ENCODE measurements at regions of chr3 and their contacts with region 1.

Region 1: DNA sequence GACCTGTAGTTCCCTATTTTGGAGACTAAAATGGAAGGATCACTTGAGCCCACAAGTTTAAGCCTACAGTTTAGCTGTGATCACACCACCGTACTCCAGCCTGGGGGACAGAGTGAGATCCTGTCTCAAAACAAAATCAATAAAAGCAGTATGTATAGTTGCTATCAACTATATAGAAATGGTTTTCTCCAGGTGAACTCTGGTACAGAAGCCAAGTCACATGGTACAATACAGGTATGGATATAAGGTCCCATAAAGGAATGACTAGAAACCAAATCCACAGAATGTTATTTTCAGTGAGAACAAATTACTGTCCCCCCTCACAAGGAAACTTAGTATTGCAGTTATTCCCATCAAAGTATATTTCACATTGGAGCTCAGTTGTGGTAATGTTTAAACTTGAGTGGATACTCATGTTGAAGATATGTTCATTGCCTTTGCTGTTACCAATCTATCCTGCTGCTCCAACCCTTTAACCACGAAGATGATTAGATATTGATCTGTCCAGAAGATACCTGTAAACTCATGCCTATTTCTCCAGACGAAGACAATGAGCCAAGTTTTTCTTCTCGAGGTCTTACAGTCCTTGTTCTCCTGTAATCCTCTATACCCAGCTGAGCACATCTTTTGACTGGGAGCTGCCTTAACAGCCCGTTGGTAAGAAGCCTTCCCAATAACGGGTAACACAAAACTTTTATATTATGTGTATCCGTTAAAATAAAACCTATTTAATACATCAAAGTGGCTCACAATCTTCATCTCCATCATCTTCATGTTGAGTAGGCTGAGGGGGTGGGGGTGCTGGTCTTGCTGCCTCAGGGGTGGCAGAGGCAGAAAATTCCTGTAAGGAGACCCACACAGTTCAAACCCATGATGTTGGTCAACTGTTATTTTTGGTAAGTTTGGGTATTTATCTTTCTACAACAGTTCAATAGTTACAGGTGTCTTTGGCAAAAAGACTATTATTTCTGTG is 24.6 kb downstream of the TRA2B start:
- DNase-seq: no peak
- ATAC-seq: peak; percentile 14
- H3K4me3 Mint-ChIP-seq: no peak overlapping the region
- H3K27ac Mint-ChIP-seq: no peak overlapping the region
- H3K4me1 Mint-ChIP-seq: no peaks in the 10 kb centered on the region
- H3K27me3 Mint-ChIP-seq: no peaks in the 10 kb centered on the region
- CTCF ChIP-seq: no peak

Region 2: GRCh38 chr3:185887066-185887465 is 26.1 kb before region 1 on chr3:
- CTCF ChIA-PET with region 1: no interaction called
- POLR2A ChIA-PET with region 1: no interaction called
- intact Hi-C with region 1: no loop called
- DNase-seq: no peak
- ATAC-seq: no peak
- H3K4me3 Mint-ChIP-seq: no peak overlapping the region
- H3K27ac Mint-ChIP-seq: no peak overlapping the region
- H3K4me1 Mint-ChIP-seq: no peaks in the 10 kb centered on the region
- H3K27me3 Mint-ChIP-seq: peaks cover 3% of the 10 kb centered on the region
- CTCF ChIP-seq: no peak

Region 3: GRCh38 chr3:185929192-185930151 is 16.3 kb after region 1 on chr3:
- CTCF ChIA-PET with region 1: no interaction called
- POLR2A ChIA-PET with region 1: interaction called, 12 read pairs
- intact Hi-C with region 1: loop called (anchors 2 kb)
- DNase-seq: no peak
- ATAC-seq: no peak
- H3K4me3 Mint-ChIP-seq: peak overlapping the region; percentile 99
- H3K27ac Mint-ChIP-seq: peak overlapping the region; percentile 81
- H3K4me1 Mint-ChIP-seq: peaks cover 91% of the 10 kb centered on the region
- H3K27me3 Mint-ChIP-seq: no peaks in the 10 kb centered on the region
- CTCF ChIP-seq: no peak

Region 4: GRCh38 chr3:186108941-186109865 is 196.0 kb after region 1 on chr3 and contains the start of gene ETV5:
- CTCF ChIA-PET with region 1: no interaction called
- POLR2A ChIA-PET with region 1: no interaction called
- intact Hi-C with region 1: no loop called
- DNase-seq: peak; percentile 85
- ATAC-seq: peak; percentile 95
- H3K4me3 Mint-ChIP-seq: peak within 1 kb of the TSS; percentile 95
- H3K27ac Mint-ChIP-seq: peak within 1 kb of the TSS; percentile 80
- H3K4me1 Mint-ChIP-seq: peaks cover 35% of the 10 kb centered on the region
- H3K27me3 Mint-ChIP-seq: peaks cover 42% of the 10 kb centered on the region
- CTCF ChIP-seq: no peak
- total RNA-seq, gene ETV5: 0.49 and 0.89 TPM in 2 replicates

Measured in activated B cell treated with CpG ODN at 0.5 μM for 24 hours (primary cell).